Colonic mucosa (tissue), 4 donors: ENCODE measurements at regions of chr2 and their contacts with region 1.

Region 1: DNA sequence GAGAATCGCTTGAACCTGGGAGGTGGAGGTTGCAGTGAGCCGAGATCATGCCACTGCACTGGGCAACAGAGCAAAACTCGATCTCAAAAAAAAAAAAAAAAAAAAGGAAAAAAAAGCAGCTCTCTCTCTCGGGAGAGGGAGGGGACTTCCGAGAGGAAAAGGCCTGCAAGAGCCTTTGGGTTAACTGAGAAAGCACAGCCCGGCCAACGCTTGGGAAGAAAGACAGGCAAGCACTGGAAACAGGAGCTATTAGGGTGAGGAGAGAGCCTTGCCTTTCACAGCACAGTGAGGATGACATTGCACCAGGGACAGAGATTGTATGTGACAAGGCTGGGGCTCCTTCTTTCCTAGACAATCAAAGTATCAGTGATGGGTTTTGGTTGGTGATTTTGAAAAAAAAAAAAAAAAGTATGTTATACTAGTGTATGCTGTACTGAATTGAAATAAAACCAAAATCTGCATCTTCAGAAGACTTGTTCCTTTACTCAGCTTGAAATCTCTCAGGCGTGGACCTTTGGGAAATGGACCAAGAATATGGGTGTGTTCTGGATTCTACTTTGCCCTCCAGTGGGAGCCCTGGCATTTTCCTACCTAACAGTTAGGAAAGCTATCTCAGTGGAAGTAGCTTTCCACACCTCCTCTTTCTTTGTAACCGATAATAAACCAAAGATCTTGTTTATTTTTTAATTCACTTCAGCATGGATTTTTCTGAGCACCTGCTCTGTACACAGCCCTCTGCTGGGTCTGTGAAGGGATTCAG is 16.7 kb downstream of the SRSF7 start:
- DNase-seq: no peak
- H3K4me3 ChIP-seq: no peak overlapping the region
- H3K27ac ChIP-seq: no peak overlapping the region
- H3K4me1 ChIP-seq: no peaks in the 10 kb centered on the region
- H3K27me3 ChIP-seq: no peaks in the 10 kb centered on the region
- CTCF ChIP-seq: no peak

Region 2: GRCh38 chr2:38315707-38316333 is 418.7 kb before region 1 on chr2:
- intact Hi-C with region 1: loop called (anchors 10 kb)
- DNase-seq: no peak
- H3K4me3 ChIP-seq: no peak overlapping the region
- H3K27ac ChIP-seq: no peak overlapping the region
- H3K4me1 ChIP-seq: no peaks in the 10 kb centered on the region
- H3K27me3 ChIP-seq: no peaks in the 10 kb centered on the region
- CTCF ChIP-seq: peak; percentile 69

Region 3: DNA sequence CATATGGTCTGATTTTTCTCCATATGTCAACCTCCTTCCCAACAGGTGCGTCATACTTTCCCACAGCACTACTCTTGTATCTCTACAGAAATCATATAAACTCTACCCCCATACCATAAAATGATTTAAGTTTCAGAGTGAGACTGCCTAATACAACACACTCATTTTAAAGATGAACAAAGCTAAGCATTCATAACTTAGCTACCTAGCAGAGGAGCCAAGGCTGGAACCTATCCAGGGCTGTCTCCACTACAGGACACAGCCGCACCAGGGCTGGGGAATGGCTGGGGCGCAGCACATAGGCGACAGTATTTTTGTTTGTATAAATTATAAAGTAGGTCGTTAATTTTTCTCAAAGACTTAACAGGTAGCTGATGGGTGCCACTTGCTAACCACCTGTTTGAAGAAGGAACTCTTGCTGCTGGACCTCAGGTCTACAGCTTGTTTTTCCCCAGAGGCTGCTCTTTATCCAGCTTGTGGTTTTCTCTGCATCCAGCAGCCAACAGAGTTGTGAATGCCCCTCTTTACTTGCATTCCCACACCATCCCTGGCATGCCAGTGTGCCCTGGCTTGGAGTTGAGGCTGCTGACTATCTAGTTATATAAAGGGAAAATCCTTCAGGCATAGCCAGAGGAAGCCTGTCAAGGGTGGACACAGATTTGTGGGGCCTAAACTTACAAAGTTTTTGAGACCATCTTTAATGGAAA is 193.7 kb before region 1 on chr2:
- intact Hi-C with region 1: loop called (anchors 5 kb)
- DNase-seq: peak; percentile 51
- H3K4me3 ChIP-seq: no peak overlapping the region
- H3K27ac ChIP-seq: no peak overlapping the region
- H3K4me1 ChIP-seq: peaks cover 7% of the 10 kb centered on the region
- H3K27me3 ChIP-seq: no peaks in the 10 kb centered on the region
- CTCF ChIP-seq: no peak

Region 4: DNA sequence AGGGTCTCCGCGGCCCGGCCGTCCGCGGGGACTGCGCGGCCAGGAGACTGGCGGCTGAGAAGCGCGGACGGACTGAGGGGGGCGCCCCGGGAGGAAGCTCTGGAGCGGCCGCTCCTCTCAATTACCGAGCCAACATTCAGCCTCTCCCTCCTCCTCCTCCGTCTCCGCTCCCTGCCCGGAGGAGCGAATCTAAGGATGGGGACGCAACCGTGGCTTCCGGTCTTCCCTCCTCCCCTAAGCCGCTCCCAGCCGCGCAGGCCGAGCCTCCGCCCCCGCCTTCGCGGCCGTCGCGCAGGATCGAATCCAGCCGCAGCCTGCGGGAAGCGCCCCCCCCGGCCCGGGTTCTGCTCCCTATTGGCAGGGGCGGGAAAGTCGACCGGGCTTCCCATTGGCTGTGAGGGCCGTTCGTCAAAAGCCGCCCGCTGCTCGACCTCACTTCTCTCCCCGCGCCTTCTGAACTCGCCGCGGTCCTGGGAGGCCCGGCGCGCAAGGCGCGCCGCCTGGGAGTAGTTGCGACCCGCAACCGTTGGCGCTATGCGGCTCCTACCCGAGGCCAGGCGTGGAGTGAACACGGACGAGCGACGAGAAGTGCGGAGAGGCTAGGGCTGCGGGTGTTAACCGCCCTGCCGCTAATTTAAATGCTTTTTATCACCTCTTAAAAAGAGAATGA is 131.6 kb before region 1 on chr2 and contains the start of gene HNRNPLL:
- intact Hi-C with region 1: loop called (anchors 5 kb)
- DNase-seq: peak; percentile 99
- H3K4me3 ChIP-seq: peak within 1 kb of the TSS; percentile 83
- H3K27ac ChIP-seq: peak within 1 kb of the TSS; percentile 99
- H3K4me1 ChIP-seq: peaks cover 12% of the 10 kb centered on the region
- H3K27me3 ChIP-seq: no peaks in the 10 kb centered on the region
- CTCF ChIP-seq: no peak
- total RNA-seq, gene HNRNPLL: 41.6 to 58.7 TPM